Dorsolateral prefrontal cortex (tissue), 120 donors: ENCODE measurements at regions of chr12 and their contacts with region 1.

Region 1: GRCh38 chr12:112870267-112870980 is 36.3 kb upstream of the OAS1 start:
- DNase-seq: no peak
- H3K4me3 ChIP-seq: no peak overlapping the region
- H3K27ac ChIP-seq: peak overlapping the region in 1 of 59 donors; percentile 37
- H3K27me3 ChIP-seq: peaks cover 0 to 3% (median 0%) of the 10 kb centered on the region in 45 donors
- CTCF ChIP-seq: no peak

Region 2: GRCh38 chr12:112537710-112538396 is 332.6 kb before region 1 on chr12:
- intact Hi-C with region 1: loop called in 1 of 2 experiments (anchors 10 kb)
- DNase-seq: no peak
- H3K4me3 ChIP-seq: no peak overlapping the region
- H3K27ac ChIP-seq: no peak overlapping the region
- H3K27me3 ChIP-seq: no peaks in the 10 kb centered on the region
- CTCF ChIP-seq: no peak